ENCODE measurements at regions of chr14 and their contacts with region 1.

Region 1: DNA sequence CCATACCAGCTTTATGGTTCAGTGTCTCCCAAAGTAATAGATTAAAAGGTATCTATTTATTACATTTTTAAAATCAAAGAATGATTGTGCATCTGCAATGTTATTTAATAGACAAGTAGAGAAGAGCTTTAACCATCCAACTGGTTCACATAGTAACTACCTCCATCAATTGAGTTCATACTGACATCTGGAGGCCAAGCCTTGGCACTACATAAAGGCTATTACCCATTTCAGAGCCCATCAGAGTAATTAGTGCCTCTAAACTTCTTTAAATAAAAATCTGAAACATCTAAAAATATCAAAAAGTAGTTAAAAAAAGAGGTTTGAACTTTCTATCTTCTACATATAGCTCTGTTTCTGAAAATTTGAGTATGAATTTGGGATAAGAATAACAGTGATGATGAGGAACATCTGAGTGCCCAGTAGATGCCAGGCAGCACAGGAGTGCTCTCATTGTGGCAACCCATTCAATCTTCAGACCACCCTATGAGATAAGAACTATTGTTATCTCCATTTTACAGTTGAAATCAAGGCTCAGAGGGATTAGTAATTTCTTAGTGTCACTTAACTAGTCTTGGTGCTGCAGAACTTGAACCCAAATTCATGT is 132.9 kb upstream of the DAAM1 start:
- DNase-seq: peak; percentile 2 to 36 (median 12)
- H3K4me3 ChIP-seq: no peak overlapping the region
- H3K4me3 Mint-ChIP-seq: no peak overlapping the region
- H3K27ac ChIP-seq: no peak overlapping the region
- H3K27ac Mint-ChIP-seq: no peak overlapping the region
- H3K4me1 ChIP-seq: no peaks in the 10 kb centered on the region
- H3K4me1 Mint-ChIP-seq: no peaks in the 10 kb centered on the region
- H3K27me3 ChIP-seq: no peaks in the 10 kb centered on the region
- H3K27me3 Mint-ChIP-seq: peaks cover 0 to 1% (median 1%) of the 10 kb centered on the region in 3 donors
- CTCF ChIP-seq: peak; percentile 74

Region 2: DNA sequence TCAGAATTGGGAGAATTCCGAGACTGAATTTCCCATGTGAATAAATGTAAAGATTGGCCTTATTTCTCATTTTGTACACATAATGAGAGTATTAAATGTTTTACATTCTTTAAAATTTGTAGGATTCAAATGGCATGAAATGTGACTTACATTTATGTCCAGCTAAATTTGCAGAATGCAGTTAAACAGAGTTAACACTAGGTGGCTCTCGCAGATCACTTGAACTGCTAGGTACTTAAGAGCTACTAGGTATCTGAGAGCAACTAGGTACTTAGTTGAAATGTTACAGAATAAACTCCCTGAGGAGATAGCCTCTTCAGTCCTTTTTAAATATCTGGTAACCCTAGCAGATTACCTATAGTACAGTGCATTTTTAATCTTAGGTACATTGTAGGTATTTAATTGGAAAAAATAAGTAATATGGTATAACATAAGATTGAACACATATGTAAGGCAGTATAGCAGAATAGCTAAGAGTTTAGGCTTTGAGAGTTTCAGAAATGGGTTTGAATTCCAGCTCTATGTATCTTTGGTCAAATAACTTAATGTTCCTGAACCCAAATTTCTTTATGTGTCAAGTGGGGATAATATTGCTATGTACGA is 554.2 kb before region 1 on chr14:
- intact Hi-C with region 1: loop called (anchors 5 to 10 kb)
- DNase-seq: peak; percentile 15 to 59 (median 47)
- H3K4me3 ChIP-seq: no peak overlapping the region
- H3K4me3 Mint-ChIP-seq: no peak overlapping the region
- H3K27ac ChIP-seq: no peak overlapping the region
- H3K27ac Mint-ChIP-seq: no peak overlapping the region
- H3K4me1 ChIP-seq: no peaks in the 10 kb centered on the region
- H3K4me1 Mint-ChIP-seq: peaks cover 2% of the 10 kb centered on the region
- H3K27me3 ChIP-seq: no peaks in the 10 kb centered on the region
- H3K27me3 Mint-ChIP-seq: no peaks in the 10 kb centered on the region
- CTCF ChIP-seq: peak; percentile 86

Region 3: DNA sequence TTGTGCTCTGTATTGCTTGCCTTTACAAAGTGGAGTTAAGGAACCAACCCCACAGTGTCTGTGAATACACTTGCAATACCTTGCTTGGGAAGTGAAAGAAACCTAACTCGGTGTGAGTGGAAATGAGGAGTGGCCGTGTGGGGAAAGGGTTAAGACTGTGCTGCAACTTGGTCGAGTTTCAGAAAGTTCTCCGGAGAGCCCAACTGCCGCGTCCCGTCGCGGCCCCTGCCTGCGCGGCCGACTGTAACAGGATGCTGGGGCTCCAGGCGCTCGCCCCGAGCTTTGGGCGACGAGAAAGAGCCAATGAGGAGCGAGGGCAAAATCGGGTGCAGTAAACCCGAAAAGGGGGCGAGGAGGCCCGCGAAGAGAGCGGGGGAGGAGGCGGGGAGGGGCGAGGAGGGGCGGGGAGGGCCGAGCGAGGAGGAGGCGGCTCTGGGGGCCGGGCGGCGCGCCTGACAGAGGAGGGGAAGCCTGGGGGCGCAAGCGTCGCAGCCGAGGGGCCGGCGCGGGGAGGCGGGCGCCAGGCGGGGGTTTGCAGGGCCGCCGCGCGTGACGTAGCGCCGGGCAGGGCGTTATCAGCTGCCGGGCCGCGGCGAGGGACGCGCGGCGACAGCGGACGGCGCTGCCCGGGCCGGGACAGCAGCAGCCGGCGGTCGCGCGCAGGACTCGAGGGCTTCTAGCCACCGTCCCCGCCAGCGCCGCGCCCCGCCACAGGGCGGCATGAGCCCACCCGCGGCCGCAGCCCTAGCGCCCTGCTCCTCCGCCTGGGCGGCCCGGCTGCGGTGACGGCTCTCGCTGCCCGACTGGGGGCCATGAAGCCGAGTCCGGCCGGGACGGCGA is 417.9 kb before region 1 on chr14 and contains the start of gene DACT1:
- intact Hi-C with region 1: loop called in 1 of 2 experiments (anchors 10 kb)
- DNase-seq: peak in 1 of 3 donors; percentile 13
- H3K4me3 ChIP-seq: peak within 1 kb of the TSS; percentile 45 to 76 (median 51)
- H3K4me3 Mint-ChIP-seq: peak within 1 kb of the TSS; percentile 92 to 97
- H3K27ac ChIP-seq: no peak within 1 kb of the TSS
- H3K27ac Mint-ChIP-seq: peak within 1 kb of the TSS in 3 of 7 donors; percentile 46 to 65 (median 58)
- H3K4me1 ChIP-seq: peaks cover 11 to 16% of the 10 kb centered on the region in 2 donors
- H3K4me1 Mint-ChIP-seq: peaks cover 28% of the 10 kb centered on the region
- H3K27me3 ChIP-seq: peaks cover 29 to 31% of the 10 kb centered on the region in 2 donors
- H3K27me3 Mint-ChIP-seq: peaks cover 30 to 40% (median 32%) of the 10 kb centered on the region in 3 donors
- CTCF ChIP-seq: no peak
- polyA plus RNA-seq, gene DACT1: 0.09 TPM in 1 of 3 donors, not detected in the others

Region 4: GRCh38 chr14:59020382-59020781 is 35.2 kb before region 1 on chr14:
- intact Hi-C with region 1: no loop called
- DNase-seq: no peak
- H3K4me3 ChIP-seq: no peak overlapping the region
- H3K4me3 Mint-ChIP-seq: no peak overlapping the region
- H3K27ac ChIP-seq: no peak overlapping the region
- H3K27ac Mint-ChIP-seq: no peak overlapping the region
- H3K4me1 ChIP-seq: no peaks in the 10 kb centered on the region
- H3K4me1 Mint-ChIP-seq: no peaks in the 10 kb centered on the region
- H3K27me3 ChIP-seq: no peaks in the 10 kb centered on the region
- H3K27me3 Mint-ChIP-seq: peaks cover 0 to 2% (median 1%) of the 10 kb centered on the region in 3 donors
- CTCF ChIP-seq: peak; percentile 44

Region 5: DNA sequence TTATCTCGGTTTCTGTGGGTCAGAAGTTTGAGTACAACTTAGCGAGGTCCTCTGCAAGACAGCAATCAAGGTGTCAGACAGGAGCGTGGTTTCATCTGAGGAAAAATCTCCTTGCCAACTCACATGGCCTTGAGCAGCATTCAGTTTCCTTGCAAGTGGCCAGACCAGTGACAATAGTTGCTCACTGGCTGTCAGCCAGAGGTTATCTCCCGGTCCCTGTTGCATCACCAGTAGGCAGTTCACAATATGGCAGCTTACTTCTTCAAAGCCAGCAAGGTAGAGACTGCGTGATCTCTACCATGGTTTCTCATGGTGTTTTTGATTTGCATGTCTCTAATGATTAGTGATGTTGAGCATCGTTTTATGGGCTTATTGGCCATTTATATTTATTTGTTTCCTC is 10.8 kb before region 1 on chr14:
- intact Hi-C with region 1: no loop called
- DNase-seq: no peak
- H3K4me3 ChIP-seq: no peak overlapping the region
- H3K4me3 Mint-ChIP-seq: no peak overlapping the region
- H3K27ac ChIP-seq: no peak overlapping the region
- H3K27ac Mint-ChIP-seq: no peak overlapping the region
- H3K4me1 ChIP-seq: no peaks in the 10 kb centered on the region
- H3K4me1 Mint-ChIP-seq: no peaks in the 10 kb centered on the region
- H3K27me3 ChIP-seq: no peaks in the 10 kb centered on the region
- H3K27me3 Mint-ChIP-seq: no peaks in the 10 kb centered on the region
- CTCF ChIP-seq: no peak

Measured in CD14-positive monocyte (primary cell).